PC-9 (cell line): ENCODE measurements at regions of chr4 and their contacts with region 1.

Region 1: GRCh38 chr4:84952009-84952408 is 14.5 kb downstream of the WDFY3 start:
- DNase-seq: peak; percentile 26 to 86
- H3K4me3 ChIP-seq: no peak overlapping the region
- H3K27ac ChIP-seq: peak overlapping the region; percentile 80
- H3K4me1 ChIP-seq: peaks cover 25% of the 10 kb centered on the region
- H3K27me3 ChIP-seq: no peaks in the 10 kb centered on the region
- CTCF ChIP-seq: no peak

Region 2: GRCh38 chr4:84870398-84871163 is 81.4 kb before region 1 on chr4:
- CTCF ChIA-PET with region 1: no interaction called
- POLR2A ChIA-PET with region 1: no interaction called
- intact Hi-C with region 1: loop called (anchors 10 kb)
- DNase-seq: peak; percentile 31 to 56
- H3K4me3 ChIP-seq: no peak overlapping the region
- H3K27ac ChIP-seq: peak overlapping the region; percentile 33
- H3K4me1 ChIP-seq: peaks cover 13% of the 10 kb centered on the region
- H3K27me3 ChIP-seq: no peaks in the 10 kb centered on the region
- CTCF ChIP-seq: no peak

Region 3: DNA sequence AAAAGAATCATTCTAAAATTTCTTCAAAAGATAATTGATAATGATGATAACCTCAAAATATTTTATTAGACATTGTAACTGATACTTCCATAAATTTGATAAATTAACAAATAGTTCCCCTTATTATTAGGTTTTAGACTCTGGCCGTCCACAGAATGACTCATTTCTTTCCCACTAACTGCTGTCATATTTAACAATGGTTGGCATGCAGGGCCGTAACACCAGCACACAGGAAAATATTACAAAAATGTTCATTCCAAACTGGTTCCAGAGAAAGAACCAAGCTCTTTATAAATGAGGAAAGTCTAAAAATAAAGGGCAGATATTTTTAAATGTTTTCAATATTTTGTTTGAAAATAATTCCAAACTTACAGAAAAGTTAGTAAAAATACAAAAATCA is 13.7 kb before region 1 on chr4:
- CTCF ChIA-PET with region 1: no interaction called
- POLR2A ChIA-PET with region 1: no interaction called
- intact Hi-C with region 1: loop called (anchors 2 kb)
- DNase-seq: peak in 1 of 2 experiments; percentile 16
- H3K4me3 ChIP-seq: no peak overlapping the region
- H3K27ac ChIP-seq: no peak overlapping the region
- H3K4me1 ChIP-seq: 0 out of 2 replicates have a peak, but pooled peaks cover 4% of the 10 kb centered on the region
- H3K27me3 ChIP-seq: no peaks in the 10 kb centered on the region
- CTCF ChIP-seq: no peak